GM10248 (cell line): ENCODE measurements at regions of chr17 and their contacts with region 1.

Region 1: GRCh38 chr17:752002-752619 is at the start of gene GEMIN4:
- DNase-seq: peak; percentile 98
- CTCF ChIP-seq: peak; percentile 98

Region 2: DNA sequence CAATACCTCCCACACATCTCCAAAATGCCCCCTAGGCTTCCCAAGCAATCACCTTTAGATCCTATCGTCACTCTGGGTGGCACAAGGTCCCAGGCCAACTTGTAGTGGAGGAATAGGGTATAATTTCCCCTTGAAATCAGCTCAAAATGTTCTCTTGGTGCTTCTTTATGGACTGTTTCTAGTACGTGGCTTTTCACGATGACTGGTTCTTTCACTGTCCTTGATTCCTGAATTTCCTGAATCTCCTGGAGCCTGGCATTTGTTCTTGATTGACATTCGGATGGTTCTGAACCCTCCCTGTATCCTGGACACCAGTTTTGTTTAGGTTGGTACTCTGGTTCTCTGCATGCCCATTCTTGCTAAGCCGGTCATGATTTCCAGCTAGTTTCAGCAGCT is 30.6 kb before region 1 on chr17:
- CTCF ChIA-PET with region 1: no interaction called
- POLR2A ChIA-PET with region 1: no interaction called
- DNase-seq: no peak
- CTCF ChIP-seq: no peak

Region 3: GRCh38 chr17:737561-738113 is 14.5 kb before region 1 on chr17:
- CTCF ChIA-PET with region 1: interaction called, 10 read pairs
- POLR2A ChIA-PET with region 1: interaction called, 3 read pairs
- DNase-seq: no peak
- CTCF ChIP-seq: no peak

Region 4: DNA sequence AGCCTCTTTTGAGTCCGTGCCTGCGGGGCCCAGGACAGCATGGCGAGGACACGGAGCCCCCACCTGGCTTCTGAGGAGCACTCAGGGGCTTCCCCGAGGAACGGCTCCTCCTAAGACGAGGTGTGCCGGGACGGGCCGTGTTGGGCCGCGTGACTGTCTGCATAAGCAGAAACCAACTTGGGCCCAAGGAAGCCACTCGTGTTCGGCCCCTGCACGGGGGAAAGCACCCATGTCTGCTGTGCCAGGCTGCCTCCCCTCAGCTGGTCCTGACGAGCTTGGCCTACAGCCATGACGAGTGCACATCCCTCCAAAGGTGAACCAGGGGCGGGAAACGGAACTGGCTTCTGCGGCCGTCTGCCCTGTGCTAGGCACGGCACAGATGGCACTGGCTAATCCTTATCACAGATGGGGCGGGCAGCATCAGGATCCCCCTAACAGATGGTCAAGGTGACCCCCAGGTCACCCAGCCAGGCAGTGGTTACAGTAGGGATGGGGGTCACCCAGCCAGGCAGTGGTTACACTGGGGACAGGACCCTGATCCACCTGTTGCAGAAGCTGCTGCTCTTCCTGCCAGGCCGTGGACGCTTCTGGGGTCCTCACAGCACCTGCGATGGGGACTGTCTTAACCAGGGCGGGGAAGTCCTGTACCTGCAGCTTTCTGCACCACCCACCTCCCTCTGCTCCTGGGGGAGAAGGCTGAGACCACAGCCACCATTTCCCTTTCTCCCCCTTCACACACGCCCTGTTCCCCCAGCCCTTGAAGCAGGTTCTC is 55.6 kb after region 1 on chr17:
- CTCF ChIA-PET with region 1: no interaction called
- POLR2A ChIA-PET with region 1: interaction called, 10 read pairs
- DNase-seq: no peak
- CTCF ChIP-seq: no peak

Region 5: DNA sequence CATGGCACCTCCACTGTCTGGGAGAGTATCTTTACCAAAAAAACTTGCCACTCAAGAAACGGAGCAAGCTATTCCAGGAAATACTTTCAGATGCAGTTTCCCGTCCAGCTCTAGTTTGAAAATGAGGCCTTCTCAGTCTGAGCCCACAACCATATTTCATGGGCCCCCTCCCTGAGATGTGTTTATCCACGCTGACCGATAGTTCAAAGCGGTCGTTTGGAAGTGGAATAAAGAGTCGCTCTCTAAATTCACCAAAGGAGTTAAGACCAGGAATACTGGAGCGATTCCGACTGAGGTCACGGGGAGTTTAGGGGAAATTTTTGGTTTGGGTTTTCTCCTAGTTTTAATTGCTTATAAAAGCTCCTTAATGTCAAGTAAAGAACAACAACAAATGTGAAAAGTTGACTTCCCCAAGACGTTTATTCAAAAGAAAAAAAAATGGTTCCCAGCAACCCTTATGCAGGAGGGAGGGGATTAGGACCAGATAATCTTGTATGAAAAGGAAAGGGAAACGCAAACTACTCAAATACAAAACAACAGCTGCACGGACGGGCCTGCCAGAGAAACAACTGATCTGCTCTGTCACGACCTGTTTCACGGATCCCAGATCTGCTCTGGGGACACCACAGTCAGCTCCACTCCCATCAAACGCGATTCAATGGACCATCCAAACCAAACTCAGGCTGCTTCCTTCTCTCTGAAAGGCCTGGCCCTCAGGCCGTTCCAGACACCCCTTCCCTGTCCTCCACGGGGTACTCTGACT is 107.1 kb after region 1 on chr17:
- CTCF ChIA-PET with region 1: no interaction called
- POLR2A ChIA-PET with region 1: no interaction called
- DNase-seq: no peak
- CTCF ChIP-seq: no peak